Ascending aorta (tissue), 2 donors: ENCODE measurements at regions of chr5 and their contacts with region 1.

Region 1: DNA sequence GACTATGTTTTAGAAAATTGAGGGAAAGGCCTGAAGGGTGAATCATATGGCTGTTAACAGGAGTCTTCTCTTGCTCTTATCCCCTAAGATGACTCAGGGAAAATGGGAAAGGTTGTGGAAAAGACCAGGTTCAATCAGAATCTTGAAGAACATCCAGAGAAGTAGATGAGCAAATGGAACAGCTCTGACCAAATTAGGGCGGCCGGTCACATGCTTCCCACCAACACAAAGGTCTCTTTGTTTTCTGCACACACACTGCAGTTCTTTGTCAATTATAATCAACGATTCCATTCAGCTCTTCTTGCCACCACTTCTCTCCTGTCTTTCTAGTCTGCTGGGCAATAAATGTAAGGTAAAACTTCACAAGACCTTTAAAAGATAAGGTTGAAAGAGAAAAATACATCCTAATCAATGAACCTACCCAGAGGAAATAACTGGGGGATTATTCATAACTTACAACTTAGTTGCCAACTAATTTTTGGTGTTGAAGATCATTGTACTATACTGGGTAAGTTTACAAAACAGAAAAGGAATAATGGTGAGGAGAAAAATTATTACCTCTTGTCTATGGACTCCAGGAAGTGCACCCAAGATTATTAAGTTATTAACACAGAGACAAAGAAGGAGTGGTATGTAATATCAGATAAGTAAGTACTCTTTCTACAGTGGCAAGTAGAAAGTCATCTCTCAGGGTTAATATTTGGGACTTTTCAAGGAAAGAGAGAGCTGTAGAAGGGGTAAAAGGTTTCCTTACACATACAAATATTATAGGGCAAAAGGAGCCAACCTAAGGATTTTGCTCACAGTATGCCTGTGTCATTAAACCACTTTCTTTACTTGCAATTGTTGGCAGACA is 441.9 kb upstream of the PIK3R1 start:
- DNase-seq: no peak
- H3K4me3 ChIP-seq: no peak overlapping the region
- H3K27ac ChIP-seq: peak overlapping the region; percentile 16 to 28
- H3K4me1 ChIP-seq: peaks cover 0 to 12% of the 10 kb centered on the region in 2 donors
- H3K27me3 ChIP-seq: no peaks in the 10 kb centered on the region
- CTCF ChIP-seq: no peak

Region 2: DNA sequence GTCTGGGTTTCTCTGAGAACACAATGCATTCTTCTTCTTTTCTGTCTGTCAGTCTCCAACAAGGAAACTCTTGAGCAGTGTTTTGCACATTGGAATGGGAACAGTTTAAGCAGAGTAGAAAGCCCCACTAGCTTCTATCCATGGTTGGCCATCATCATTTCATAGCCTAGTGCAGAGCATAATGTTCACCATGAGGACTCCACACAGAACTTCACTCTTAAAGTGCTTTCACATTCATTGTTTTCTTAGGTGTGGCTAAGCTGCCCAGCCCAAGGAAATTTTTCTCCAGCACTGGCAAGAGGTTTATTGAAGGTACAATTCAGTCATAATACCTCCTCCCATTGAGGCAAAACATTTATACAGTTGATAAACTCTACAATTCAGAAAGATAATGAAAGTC is 74.1 kb before region 1 on chr5:
- intact Hi-C with region 1: loop called (anchors 5 kb)
- DNase-seq: no peak
- H3K4me3 ChIP-seq: no peak overlapping the region
- H3K27ac ChIP-seq: no peak overlapping the region
- H3K4me1 ChIP-seq: peaks cover 0 to 12% of the 10 kb centered on the region in 2 donors
- H3K27me3 ChIP-seq: no peaks in the 10 kb centered on the region
- CTCF ChIP-seq: no peak

Region 3: DNA sequence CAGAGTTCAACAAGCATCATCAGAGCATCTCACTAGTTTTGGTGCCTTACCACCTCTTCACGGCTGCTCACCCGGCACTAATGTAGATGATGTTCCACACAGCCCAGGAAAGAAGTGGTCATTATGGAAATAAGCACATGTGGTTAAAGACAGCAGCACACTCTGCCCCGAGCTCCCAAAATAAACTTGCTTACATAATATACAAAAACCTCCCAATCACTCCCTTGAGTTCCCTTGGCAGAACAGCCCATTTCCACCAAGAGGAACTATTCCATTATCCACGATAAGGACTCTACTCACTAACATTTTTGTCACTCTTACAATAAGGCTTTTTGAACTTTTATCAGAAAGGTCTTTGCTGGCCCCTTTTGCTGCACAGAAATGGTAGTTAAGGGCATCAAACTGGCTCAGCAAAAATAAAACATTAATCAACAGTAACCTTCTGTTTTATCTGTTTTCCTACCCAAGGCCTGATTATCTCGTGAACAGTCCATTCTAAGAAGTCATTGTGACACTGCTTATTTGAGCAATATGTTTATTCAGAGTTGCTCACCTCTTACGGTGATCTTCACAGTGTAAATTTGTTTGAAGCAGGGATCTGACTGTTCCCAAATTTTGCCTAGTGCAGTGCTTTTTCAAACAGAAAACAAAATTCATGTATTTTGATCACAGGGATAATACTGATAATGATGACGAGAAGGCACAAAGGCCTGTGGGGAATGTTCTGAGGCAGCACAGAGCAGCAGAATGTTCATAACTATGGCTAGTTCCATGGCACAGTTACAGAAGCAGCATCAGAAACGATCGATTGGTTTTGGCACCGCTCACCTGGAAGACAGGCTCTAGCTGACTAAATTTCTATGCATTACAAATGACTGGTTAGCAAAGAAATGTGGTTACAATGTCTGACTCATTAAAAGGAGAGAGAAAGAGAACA is 42.1 kb after region 1 on chr5:
- intact Hi-C with region 1: no loop called
- DNase-seq: no peak
- H3K4me3 ChIP-seq: no peak overlapping the region
- H3K27ac ChIP-seq: peak overlapping the region; percentile 28 to 45
- H3K4me1 ChIP-seq: peaks cover 8 to 25% of the 10 kb centered on the region in 2 donors
- H3K27me3 ChIP-seq: no peaks in the 10 kb centered on the region
- CTCF ChIP-seq: no peak